Activated T-helper 2 cell treated with anti-CD3 and anti-CD28 coated beads, Interferon-gamma antibody, Interleukin-2, Interleukin-4, amounts not matched to agents 10 μg/mL and 5 μg/mL and 100 μg/mL, durations not matched to agents 14 hours and 24 hours and 36 hours (primary cell): ENCODE measurements at regions of chr18 and their contacts with region 1.

Region 1: DNA sequence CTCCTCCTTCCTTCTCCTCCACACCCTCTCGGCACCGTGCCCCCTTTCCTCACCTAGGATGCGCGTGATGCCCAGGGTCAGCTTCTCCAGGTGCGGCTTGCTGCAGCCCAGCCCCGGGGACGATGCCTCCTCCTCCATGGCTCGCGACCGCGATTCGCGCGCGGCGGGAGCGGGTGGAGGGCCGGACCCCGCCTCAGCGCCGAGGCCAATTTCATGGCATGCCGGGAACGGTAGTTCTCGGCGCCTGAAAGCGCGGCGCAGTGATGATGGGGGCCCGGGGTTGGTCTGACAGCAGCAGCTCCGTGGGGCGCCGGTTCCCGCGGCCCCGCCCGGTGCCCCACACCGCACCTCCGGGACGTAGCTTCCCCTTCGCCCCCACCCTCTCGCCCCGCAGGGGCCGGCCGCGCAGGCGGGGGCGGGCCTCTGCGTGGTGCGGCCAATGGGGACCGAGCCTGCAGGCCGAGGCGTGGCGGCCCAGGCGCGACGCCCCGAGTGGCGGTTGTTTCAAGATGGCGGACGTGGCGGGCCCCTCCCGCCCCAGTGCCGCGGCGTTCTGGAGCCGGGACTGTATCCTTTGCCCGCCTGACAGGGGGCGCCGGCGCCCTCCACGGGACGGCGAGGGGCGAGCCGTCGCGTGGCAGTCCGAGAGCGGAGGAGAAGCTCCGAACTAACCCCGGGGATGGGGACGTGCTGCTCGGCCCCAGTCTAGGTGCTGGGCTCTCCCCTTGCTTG is at the starts of genes KIAA1328 and TPGS2:
- DNase-seq: peak; percentile 86
- H3K4me3 Mint-ChIP-seq: peak within 1 kb of the TSS; percentile 88
- H3K27ac Mint-ChIP-seq: peak within 1 kb of the TSS; percentile 95
- H3K4me1 Mint-ChIP-seq: peaks cover 48% of the 10 kb centered on the region
- H3K27me3 Mint-ChIP-seq: no peaks in the 10 kb centered on the region
- total RNA-seq, gene KIAA1328: 7.4 and 7.9 TPM in 2 replicates
- total RNA-seq, gene TPGS2: 81.6 and 83.3 TPM in 2 replicates

Region 2: GRCh38 chr18:36129300-36130038 is 699.3 kb before region 1 on chr18 and contains the starts of genes ELP2 and SLC39A6:
- intact Hi-C with region 1: loop called (anchors 2 kb)
- DNase-seq: peak; percentile 92
- H3K4me3 Mint-ChIP-seq: peak within 1 kb of the TSS; percentile 95
- H3K27ac Mint-ChIP-seq: peak within 1 kb of the TSS; percentile 93
- H3K4me1 Mint-ChIP-seq: peaks cover 47% of the 10 kb centered on the region
- H3K27me3 Mint-ChIP-seq: no peaks in the 10 kb centered on the region
- total RNA-seq, gene ELP2: 93.3 and 94.2 TPM in 2 replicates
- total RNA-seq, gene SLC39A6: 41.7 and 42.7 TPM in 2 replicates

Region 3: GRCh38 chr18:36638224-36638623 is 190.6 kb before region 1 on chr18:
- intact Hi-C with region 1: no loop called
- DNase-seq: no peak
- H3K4me3 Mint-ChIP-seq: no peak overlapping the region
- H3K27ac Mint-ChIP-seq: no peak overlapping the region
- H3K4me1 Mint-ChIP-seq: no peaks in the 10 kb centered on the region
- H3K27me3 Mint-ChIP-seq: peaks cover 7% of the 10 kb centered on the region

Region 4: DNA sequence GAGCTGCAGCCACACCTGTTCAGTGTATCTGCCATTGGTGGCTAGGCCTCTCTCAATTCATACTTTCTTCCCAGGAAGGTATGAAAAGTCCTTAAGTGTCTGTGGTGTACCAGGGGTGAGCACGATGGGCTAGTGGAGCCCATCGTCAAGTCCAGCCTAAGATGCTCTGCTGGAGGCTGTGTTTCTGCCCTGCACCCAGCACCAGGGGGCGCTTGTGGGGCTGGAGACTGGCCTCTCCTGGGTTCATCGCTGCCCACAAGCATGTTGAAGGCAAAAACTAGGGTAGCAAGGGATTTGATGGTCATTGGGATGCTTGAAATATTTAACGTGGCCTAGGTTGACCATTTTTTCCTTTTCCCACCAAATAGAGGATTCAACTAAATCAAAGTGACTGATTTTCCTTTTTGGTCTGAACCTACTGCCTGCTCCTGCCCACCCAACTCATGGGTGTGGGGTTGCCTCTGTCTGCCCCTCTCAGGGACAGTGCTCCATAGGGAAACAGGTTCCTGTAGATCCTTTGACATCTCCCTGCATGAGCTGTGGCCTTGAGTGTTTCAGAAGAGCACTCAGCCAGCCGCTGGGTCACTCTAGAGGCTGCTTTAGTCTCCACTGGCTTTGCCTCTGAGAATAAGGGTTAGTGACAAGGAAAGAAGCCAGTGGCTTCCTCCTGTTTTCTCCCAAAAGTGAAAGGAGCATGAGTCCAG is 59.0 kb before region 1 on chr18:
- intact Hi-C with region 1: loop called (anchors 5 kb)
- DNase-seq: no peak
- H3K4me3 Mint-ChIP-seq: no peak overlapping the region
- H3K27ac Mint-ChIP-seq: no peak overlapping the region
- H3K4me1 Mint-ChIP-seq: peaks cover 22% of the 10 kb centered on the region
- H3K27me3 Mint-ChIP-seq: no peaks in the 10 kb centered on the region

Region 5: GRCh38 chr18:36850530-36851201 is 21.9 kb after region 1 on chr18:
- intact Hi-C with region 1: loop called (anchors 2 kb)
- DNase-seq: no peak
- H3K4me3 Mint-ChIP-seq: no peak overlapping the region
- H3K27ac Mint-ChIP-seq: peak overlapping the region; percentile 7
- H3K4me1 Mint-ChIP-seq: peaks cover 7% of the 10 kb centered on the region
- H3K27me3 Mint-ChIP-seq: no peaks in the 10 kb centered on the region

Region 6: DNA sequence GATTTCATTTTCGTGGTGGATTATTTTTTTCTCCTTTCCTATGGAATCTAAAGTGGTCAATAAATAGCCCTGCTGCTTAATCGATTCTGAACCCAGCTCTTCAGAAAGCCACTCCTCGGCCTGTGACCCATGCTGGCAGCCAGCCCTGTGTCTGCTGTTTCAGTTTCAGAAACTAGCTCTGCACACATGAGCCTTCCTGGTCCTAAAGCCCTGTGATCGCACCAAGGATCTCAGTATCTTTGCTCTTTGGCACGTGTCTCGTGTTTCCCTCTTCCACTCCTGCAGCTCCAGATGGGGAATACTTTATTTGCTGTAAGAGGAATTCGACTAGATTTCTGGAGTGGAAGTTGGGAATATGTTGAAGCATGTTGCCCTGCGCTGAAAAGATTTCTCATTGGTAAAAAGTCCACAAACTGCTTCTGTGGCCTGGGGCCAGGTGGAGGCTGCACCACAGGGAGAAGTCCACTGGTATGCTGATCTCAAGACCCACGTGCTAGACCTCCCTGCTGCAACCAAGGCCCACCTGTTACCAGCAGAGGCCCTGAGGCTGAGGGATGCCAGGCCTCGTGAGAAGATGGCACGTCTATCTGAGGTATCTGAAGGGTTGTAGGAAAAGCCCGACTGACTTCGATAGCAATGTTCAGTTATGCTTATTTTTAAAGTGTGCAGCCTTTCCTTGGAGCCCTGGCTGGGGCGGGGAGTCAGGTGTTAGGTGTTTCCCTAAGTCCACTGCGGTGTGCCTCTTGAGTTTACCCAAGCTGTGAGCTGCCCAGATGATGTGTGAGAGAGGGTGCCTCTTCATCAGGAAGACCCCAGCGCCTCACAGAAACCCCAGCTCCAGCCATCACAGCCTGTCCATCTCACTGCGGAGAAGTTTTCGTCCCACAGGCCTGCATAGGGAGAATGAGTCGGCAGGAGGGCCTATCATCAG is 770.4 kb after region 1 on chr18:
- intact Hi-C with region 1: no loop called
- DNase-seq: no peak
- H3K4me3 Mint-ChIP-seq: no peak overlapping the region
- H3K27ac Mint-ChIP-seq: no peak overlapping the region
- H3K4me1 Mint-ChIP-seq: no peaks in the 10 kb centered on the region
- H3K27me3 Mint-ChIP-seq: no peaks in the 10 kb centered on the region